Lower leg skin (tissue), 4 donors: ENCODE measurements at regions of chr14 and their contacts with region 1.

Region 1: DNA sequence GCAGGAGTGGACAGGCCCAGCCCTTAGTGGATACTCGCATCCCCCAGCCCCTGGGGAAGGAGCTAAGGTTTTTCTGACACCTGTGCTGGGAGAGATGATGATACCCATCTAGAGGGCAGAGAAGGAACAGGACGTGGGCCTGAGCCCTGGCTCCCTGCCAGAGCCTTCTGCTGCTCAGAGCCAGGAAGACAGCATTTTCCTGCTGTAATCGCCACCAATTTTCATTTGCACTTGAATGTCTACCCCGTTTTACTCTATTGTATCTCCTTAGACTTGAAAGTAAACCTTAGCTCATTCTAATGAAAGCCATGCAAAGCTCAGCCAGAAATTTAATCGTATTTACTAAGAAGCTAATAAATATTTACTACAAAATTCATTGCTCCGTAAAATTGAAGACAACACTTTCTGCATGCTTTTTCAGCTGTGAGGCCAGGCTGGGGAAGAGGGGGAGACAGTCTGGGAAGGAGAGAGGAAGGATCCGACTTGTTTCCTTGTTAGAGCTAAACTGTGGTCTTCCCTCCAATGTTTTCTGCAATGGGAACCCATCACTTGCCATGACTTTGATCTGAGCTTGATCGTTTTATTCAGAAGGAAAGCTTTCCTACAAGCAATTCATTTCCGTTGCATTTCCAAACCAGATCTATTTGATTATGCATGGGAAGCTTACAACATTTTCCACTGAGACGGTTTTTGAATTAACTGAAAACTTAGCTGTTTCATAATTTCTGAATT is 17.6 kb upstream of the TRAF3 start:
- DNase-seq: no peak
- H3K4me3 ChIP-seq: no peak overlapping the region
- CTCF ChIP-seq: no peak
- POLR2A ChIP-seq: no peak

Region 2: GRCh38 chr14:102539580-102540314 is 219.9 kb before region 1 on chr14:
- intact Hi-C with region 1: no loop called
- DNase-seq: no peak
- H3K4me3 ChIP-seq: no peak overlapping the region
- CTCF ChIP-seq: no peak
- POLR2A ChIP-seq: no peak

Region 3: GRCh38 chr14:102568114-102568621 is 191.5 kb before region 1 on chr14:
- intact Hi-C with region 1: no loop called
- DNase-seq: no peak
- H3K4me3 ChIP-seq: no peak overlapping the region
- CTCF ChIP-seq: no peak
- POLR2A ChIP-seq: no peak

Region 4: DNA sequence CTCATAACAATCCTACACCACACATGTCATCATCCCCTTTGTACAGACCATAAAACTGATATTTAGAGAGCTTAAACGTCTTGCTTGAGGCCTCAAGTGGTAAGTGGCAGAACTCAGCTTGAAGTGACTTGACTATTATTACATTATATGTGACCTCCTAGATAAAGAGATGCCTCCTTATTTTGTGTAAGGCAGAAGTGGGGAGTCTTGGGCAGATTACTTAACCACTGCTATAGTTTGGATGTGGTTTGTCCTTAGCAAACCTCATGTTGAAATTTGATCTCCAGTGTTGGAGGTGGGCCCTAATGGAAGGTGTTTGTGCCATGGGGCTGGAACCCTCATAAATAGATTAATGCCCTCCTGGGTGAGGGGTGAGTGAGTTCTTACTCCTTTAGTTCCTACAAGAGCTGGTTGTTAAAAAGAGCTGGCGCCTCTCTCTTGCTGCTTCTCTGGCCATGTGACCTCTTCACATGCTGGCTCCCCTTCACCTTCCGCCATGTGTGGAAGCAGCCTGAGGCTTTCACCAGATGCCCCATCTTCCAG is 129.7 kb before region 1 on chr14:
- intact Hi-C with region 1: no loop called
- DNase-seq: no peak
- H3K4me3 ChIP-seq: no peak overlapping the region
- CTCF ChIP-seq: no peak
- POLR2A ChIP-seq: no peak

Region 5: GRCh38 chr14:103372603-103373304 is 613.1 kb after region 1 on chr14:
- intact Hi-C with region 1: loop called (anchors 5 kb)
- DNase-seq: no peak
- H3K4me3 ChIP-seq: no peak overlapping the region
- CTCF ChIP-seq: no peak
- POLR2A ChIP-seq: no peak